Naive thymus-derived CD8-positive, alpha-beta T cell (primary cell): ENCODE measurements at regions of chr2 and their contacts with region 1.

Region 1: DNA sequence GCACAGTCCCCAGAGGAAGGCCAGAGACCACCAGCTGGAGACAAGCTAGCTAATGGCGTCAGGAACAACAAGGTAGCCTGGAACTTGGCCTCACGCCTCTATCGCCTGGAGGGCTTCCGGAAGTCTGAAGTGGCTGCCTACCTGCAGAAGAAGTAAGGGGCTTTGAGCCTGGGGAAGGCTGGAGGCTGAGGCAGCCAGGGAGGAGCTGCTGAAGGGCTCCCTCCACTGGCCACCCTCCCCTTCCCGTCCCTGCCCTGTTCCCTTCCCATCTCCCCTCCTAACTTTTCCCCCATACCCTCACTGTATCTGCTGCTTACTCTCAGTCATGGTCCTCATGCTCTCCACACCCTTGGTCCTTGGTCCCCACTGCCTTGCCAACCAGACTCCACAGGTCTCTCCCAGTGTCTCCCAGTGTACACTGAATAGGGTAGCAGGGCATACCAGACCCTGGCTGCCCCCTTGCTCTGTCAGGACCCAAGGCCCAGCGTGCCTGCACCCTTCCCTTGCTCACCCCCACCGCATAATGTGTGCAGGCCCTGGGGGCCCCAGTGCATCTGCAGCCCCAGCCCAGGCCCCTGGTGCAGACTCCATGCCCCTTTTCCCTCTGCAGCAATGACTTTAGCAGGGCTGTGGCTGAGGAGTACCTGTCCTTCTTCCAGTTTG is 18.8 kb downstream of the PSD4 start:
- DNase-seq: no peak
- ATAC-seq: no peak
- H3K4me3 Mint-ChIP-seq: no peak overlapping the region
- H3K27ac Mint-ChIP-seq: peak overlapping the region in 9 of 10 donors; percentile 20 to 91 (median 76)
- H3K4me1 Mint-ChIP-seq: peaks cover 28 to 64% (median 47%) of the 10 kb centered on the region in 4 donors
- H3K27me3 Mint-ChIP-seq: no peaks in the 10 kb centered on the region

Region 2: GRCh38 chr2:113181258-113182051 is 11.1 kb before region 1 on chr2:
- POLR2A ChIA-PET with region 1: interaction called, 80 read pairs
- DNase-seq: peak in 2 of 10 donors; percentile 20 to 32
- ATAC-seq: peak; percentile 41 to 54
- H3K4me3 Mint-ChIP-seq: peak overlapping the region; percentile 61 to 95 (median 78)
- H3K27ac Mint-ChIP-seq: peak overlapping the region; percentile 87 to 97 (median 94)
- H3K4me1 Mint-ChIP-seq: peaks cover 51 to 98% (median 95%) of the 10 kb centered on the region in 4 donors
- H3K27me3 Mint-ChIP-seq: no peaks in the 10 kb centered on the region